CD8-positive, alpha-beta T cell (primary cell): ENCODE measurements at regions of chr19 and their contacts with region 1.

Region 1: GRCh38 chr19:45405435-45406225 is 761 bp upstream of the PPP1R13L start:
- DNase-seq: peak; percentile 69 to 89 (median 85)
- ATAC-seq: peak; percentile 63
- H3K4me3 ChIP-seq: peak overlapping the region; percentile 63 to 85
- H3K4me3 Mint-ChIP-seq: peak overlapping the region; percentile 97
- H3K27ac ChIP-seq: peak overlapping the region; percentile 68 to 92
- H3K27ac Mint-ChIP-seq: peak overlapping the region; percentile 95
- H3K4me1 ChIP-seq: peaks cover 25% of the 10 kb centered on the region
- H3K4me1 Mint-ChIP-seq: peaks cover 31% of the 10 kb centered on the region
- H3K27me3 ChIP-seq: peaks cover 16 to 26% of the 10 kb centered on the region in 2 experiments
- H3K27me3 Mint-ChIP-seq: peaks cover 26% of the 10 kb centered on the region
- CTCF ChIP-seq: no peak

Region 2: DNA sequence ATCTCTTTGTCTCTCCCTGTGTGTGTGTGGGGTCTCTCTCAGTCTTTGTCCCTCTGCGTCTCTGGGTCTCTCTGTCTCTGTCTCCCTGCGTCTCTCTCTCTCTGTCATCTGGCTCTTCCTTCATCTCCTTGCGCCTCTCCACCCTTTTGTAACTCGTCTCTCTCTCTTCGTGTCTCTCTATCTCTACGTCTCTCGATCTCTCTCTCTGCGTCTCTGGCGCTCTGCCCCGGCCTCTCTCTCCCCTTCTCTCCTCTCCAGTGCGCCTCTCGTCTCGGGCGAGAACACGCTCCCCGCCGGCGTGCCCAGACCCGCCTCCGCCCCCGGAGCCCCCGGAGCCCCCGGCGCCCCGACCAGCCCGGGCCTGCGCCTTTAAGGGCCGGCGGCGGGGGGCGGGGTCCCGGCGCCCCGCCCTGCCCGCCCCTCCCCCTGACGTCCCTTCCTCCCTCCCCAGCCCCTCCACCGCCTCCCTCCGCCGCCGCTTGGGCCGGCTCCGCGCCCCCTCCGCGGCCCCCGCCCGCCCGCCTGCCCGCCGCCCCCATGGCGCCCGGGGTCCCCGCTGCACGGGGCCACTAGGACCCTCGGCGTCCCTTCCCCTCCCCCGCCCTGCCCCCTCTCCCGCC is 154.7 kb before region 1 on chr19 and contains the start of gene MARK4:
- CTCF ChIA-PET with region 1: no interaction called
- POLR2A ChIA-PET with region 1: no interaction called
- intact Hi-C with region 1: loop called in 1 of 2 experiments (anchors 1 kb)
- DNase-seq: peak; percentile 17 to 83 (median 55)
- ATAC-seq: peak; percentile 69
- H3K4me3 ChIP-seq: peak within 1 kb of the TSS; percentile 66 to 68
- H3K4me3 Mint-ChIP-seq: peak within 1 kb of the TSS; percentile 93
- H3K27ac ChIP-seq: peak within 1 kb of the TSS; percentile 20 to 67
- H3K27ac Mint-ChIP-seq: peak within 1 kb of the TSS; percentile 72
- H3K4me1 ChIP-seq: peaks cover 39% of the 10 kb centered on the region
- H3K4me1 Mint-ChIP-seq: peaks cover 38% of the 10 kb centered on the region
- H3K27me3 ChIP-seq: no peaks in the 10 kb centered on the region
- H3K27me3 Mint-ChIP-seq: no peaks in the 10 kb centered on the region
- CTCF ChIP-seq: no peak
- total RNA-seq, gene MARK4: 17.2 to 19.9 TPM

Region 3: DNA sequence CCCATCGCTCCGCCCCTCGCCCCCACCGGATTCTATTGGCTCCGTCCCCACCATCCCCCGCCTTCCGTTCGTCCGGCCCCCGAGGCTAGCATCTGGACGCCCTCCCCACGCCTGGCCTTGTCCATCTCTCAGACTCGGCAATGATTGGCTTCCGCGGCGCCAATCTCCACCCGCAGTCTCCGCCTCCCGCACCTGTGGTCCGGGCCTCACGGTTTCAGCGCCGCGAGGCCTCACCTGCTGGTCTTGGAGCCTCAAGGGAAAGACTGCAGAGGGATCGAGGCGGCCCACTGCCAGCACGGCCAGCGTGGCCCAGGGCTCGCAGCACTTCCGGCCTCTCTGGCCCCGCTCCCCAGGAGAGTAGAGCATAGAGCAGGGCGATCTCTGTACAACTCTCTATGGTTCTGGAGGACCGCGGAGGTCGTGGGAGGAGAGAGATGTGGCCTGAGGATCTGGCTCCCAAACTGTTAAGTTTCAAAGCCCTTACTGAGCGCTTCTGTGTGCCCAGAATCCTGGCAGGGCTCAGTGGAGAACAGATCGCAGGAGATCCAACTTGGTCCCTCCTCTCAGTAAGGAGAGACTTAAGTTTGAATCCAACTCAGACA is 18.1 kb after region 1 on chr19 and contains the start of gene ERCC1:
- CTCF ChIA-PET with region 1: interaction called, 4 read pairs
- POLR2A ChIA-PET with region 1: no interaction called
- intact Hi-C with region 1: loop called (anchors 1 kb)
- DNase-seq: peak in 6 of 9 experiments; percentile 35 to 84 (median 48)
- ATAC-seq: peak; percentile 57
- H3K4me3 ChIP-seq: peak within 1 kb of the TSS; percentile 72 to 95
- H3K4me3 Mint-ChIP-seq: peak within 1 kb of the TSS; percentile 93
- H3K27ac ChIP-seq: peak within 1 kb of the TSS; percentile 48 to 88
- H3K27ac Mint-ChIP-seq: peak within 1 kb of the TSS; percentile 90
- H3K4me1 ChIP-seq: peaks cover 32% of the 10 kb centered on the region
- H3K4me1 Mint-ChIP-seq: peaks cover 55% of the 10 kb centered on the region
- H3K27me3 ChIP-seq: no peaks in the 10 kb centered on the region
- H3K27me3 Mint-ChIP-seq: peaks cover 2% of the 10 kb centered on the region
- CTCF ChIP-seq: no peak
- total RNA-seq, gene ERCC1: 28.7 to 31.5 TPM

Region 4: DNA sequence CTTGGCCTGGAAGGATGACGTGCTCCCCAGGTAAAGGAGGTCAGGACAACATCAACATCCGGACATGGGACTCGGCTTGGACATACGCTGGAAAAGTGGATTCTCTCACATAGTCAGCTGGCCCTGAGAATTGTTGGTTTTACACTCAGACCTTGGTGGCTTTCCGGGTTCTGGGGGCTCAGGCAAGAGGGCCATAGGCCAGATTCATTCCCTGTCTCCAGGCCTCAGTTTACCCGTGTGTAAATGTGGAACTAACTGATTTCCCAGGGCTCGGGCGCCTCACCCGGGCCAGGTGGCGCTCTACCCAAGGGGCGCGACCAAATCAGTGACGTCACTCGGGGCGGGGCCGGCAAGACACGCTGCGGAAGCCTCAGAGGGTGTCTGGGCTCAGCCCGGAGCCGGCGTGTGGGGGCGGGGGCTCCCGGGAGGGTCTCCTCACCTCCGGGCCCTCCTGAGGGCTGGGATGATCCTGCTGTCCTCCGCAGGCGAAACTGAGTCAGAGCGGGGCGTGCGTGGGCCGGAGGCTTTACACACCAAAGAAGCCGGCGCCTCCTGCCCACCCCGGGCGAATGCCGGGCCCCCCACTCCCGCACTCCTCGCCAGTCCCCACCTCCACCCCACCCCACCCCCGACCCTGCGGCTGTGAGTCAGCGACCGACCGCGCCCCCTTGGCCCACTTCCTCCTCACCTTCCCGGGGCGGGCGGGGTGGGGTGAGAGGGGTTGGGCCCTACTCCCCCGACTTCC is 100.8 kb after region 1 on chr19:
- CTCF ChIA-PET with region 1: no interaction called
- POLR2A ChIA-PET with region 1: no interaction called
- intact Hi-C with region 1: loop called (anchors 1 kb)
- DNase-seq: peak; percentile 93 to 99 (median 97)
- ATAC-seq: peak; percentile 79
- H3K4me3 ChIP-seq: peak overlapping the region; percentile 74 to 90
- H3K4me3 Mint-ChIP-seq: peak overlapping the region; percentile 88
- H3K27ac ChIP-seq: peak overlapping the region; percentile 85 to 91
- H3K27ac Mint-ChIP-seq: peak overlapping the region; percentile 93
- H3K4me1 ChIP-seq: peaks cover 33% of the 10 kb centered on the region
- H3K4me1 Mint-ChIP-seq: peaks cover 39% of the 10 kb centered on the region
- H3K27me3 ChIP-seq: no peaks in the 10 kb centered on the region
- H3K27me3 Mint-ChIP-seq: no peaks in the 10 kb centered on the region
- CTCF ChIP-seq: peak; percentile 32

Region 5: DNA sequence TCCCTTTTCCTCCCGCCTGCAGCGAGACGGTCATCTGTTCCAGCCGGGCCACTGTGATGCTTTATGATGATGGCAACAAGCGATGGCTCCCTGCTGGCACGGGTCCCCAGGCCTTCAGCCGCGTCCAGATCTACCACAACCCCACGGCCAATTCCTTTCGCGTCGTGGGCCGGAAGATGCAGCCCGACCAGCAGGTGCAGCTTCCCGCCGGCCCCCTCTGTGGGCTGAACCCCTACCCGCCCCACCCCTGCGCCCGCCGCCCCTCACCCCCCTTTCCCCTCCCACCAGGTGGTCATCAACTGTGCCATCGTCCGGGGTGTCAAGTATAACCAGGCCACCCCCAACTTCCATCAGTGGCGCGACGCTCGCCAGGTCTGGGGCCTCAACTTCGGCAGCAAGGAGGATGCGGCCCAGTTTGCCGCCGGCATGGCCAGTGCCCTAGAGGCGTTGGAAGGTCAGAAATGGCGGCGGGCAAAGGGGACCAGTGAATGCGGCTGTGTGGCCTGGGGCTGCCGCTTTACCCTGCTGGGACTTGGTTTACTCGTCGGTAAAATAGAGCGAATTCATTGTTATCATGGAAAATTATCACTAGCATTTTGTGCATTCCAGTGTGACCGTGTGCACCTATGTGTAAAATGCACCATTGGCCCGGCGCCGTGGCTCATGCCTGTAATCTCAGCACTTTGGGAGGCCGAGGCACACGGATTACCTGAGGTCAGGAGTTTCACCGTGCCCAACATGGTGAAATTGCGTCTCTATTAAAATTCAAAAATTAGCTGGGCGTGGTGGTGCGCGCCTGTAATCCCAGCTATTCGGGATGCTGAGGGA is 112.2 kb after region 1 on chr19:
- CTCF ChIA-PET with region 1: no interaction called
- POLR2A ChIA-PET with region 1: no interaction called
- intact Hi-C with region 1: no loop called
- DNase-seq: no peak
- ATAC-seq: no peak
- H3K4me3 ChIP-seq: no peak overlapping the region
- H3K4me3 Mint-ChIP-seq: no peak overlapping the region
- H3K27ac ChIP-seq: no peak overlapping the region
- H3K27ac Mint-ChIP-seq: no peak overlapping the region
- H3K4me1 ChIP-seq: peaks cover 34% of the 10 kb centered on the region
- H3K4me1 Mint-ChIP-seq: peaks cover 28% of the 10 kb centered on the region
- H3K27me3 ChIP-seq: no peaks in the 10 kb centered on the region
- H3K27me3 Mint-ChIP-seq: no peaks in the 10 kb centered on the region
- CTCF ChIP-seq: no peak

Region 6: GRCh38 chr19:45792470-45793177 is 387.0 kb after region 1 on chr19 and contains the start of gene DMWD:
- CTCF ChIA-PET with region 1: no interaction called
- POLR2A ChIA-PET with region 1: no interaction called
- intact Hi-C with region 1: loop called in 1 of 2 experiments (anchors 10 kb)
- DNase-seq: peak; percentile 99 to 100 (median 99)
- ATAC-seq: peak; percentile 96
- H3K4me3 ChIP-seq: peak within 1 kb of the TSS; percentile 55 to 62
- H3K4me3 Mint-ChIP-seq: peak within 1 kb of the TSS; percentile 90
- H3K27ac ChIP-seq: peak within 1 kb of the TSS; percentile 37 to 63
- H3K27ac Mint-ChIP-seq: peak within 1 kb of the TSS; percentile 75
- H3K4me1 ChIP-seq: peaks cover 28% of the 10 kb centered on the region
- H3K4me1 Mint-ChIP-seq: peaks cover 37% of the 10 kb centered on the region
- H3K27me3 ChIP-seq: peaks cover 3 to 6% of the 10 kb centered on the region in 2 experiments
- H3K27me3 Mint-ChIP-seq: peaks cover 18% of the 10 kb centered on the region
- CTCF ChIP-seq: no peak
- total RNA-seq, gene DMWD: 23.8 to 25.5 TPM